Activated CD8-positive, alpha-beta memory T cell treated with anti-CD3 and anti-CD28 coated beads, Interleukin-2, amount 10 ng/mL, durations not matched to agents 7 days and 5 days (primary cell): ENCODE measurements at regions of chr14 and their contacts with region 1.

Region 1: DNA sequence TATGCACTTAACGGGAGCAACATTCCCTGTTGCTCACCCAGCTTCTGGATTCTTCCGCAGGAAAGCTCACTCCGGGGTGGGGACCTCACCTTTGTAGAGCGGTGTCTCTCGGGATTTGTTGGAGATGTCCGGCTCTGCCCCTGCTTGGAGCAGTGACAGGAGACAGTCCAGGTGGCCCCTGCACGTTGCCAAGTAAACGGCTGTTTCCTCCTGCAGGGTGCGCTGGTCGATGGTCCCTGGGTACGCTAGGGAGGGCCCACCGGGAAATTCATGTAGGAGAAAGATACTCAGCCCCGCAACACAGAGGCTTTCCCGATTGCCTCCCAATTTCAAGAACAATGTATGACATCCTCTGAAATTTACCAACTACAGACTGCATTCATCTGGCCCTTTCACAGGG is 23.1 kb downstream of the ASB2 start:
- DNase-seq: no peak
- ATAC-seq: no peak
- H3K4me3 Mint-ChIP-seq: peak overlapping the region; percentile 99
- H3K27ac Mint-ChIP-seq: peak overlapping the region; percentile 99
- H3K4me1 Mint-ChIP-seq: peaks cover 89% of the 10 kb centered on the region
- H3K27me3 Mint-ChIP-seq: no peaks in the 10 kb centered on the region

Region 2: DNA sequence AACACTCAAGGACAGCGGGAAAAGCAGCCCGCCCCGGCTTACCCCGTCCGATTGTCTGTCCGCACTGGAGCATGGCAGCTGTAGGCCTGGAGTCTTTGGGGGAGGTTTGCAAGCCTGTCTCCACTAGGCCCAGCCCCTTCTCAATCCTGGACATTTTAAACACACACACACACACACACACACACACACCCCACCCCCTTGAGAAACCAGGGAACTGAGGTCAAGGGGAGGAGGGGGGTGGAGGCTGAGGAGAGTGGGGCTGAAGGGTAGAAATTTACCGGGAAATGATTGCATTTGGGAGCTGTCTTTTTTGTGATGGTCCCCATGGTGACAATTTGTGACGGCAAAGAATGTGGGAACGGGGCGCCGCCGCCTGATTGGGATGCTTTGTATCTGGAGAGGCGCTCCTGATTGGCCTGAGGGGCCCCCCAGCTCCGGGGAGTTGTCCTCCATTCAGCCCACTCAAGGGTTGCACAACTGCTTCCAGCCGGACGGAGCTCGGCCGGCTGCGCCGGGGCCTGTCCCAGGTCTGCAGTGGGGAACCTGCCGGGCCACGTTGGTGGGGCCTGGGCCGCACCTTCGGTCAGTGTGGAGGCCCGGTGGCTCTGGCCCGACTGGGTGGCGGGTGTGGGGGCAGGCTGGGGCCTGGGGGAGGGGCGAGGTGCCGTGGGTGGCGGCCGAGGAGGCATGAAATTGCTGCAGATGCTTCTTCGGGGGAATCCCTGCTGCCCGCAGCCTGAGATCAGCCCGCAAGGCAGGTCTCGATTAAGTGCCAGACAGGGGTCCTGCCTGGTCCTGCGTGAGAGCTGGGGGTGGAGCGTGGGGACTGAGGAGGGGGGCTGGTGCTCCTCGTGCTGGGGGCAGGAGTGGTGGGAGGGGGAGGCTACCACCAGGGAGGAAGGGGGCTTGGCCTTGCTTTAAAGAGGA is 26.1 kb before region 1 on chr14 and contains the start of gene FAM181A:
- CTCF ChIA-PET with region 1: no interaction called
- DNase-seq: no peak
- ATAC-seq: no peak
- H3K4me3 Mint-ChIP-seq: no peak within 1 kb of the TSS
- H3K27ac Mint-ChIP-seq: no peak within 1 kb of the TSS
- H3K4me1 Mint-ChIP-seq: no peaks in the 10 kb centered on the region
- H3K27me3 Mint-ChIP-seq: no peaks in the 10 kb centered on the region
- total RNA-seq, gene FAM181A: not detected

Region 3: DNA sequence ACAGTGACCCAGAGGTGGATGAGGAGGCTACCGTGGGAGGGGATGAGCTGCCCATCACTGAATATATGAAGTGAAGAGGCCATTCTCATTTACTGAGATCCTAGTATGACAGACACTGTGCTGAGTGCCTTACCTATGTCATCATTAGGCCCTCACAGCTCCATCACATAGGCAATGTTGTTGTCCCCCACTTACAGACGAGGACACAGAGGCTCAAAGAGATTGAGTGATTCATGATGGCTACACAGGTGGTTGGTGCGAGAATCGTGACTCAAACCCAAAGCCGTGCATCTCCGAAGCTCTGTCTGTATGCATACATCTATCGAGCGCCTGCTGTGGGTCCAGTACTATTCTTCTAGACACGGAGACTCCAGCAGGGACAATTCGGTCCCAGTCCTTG is 37.9 kb after region 1 on chr14:
- CTCF ChIA-PET with region 1: interaction called, 11 read pairs
- DNase-seq: no peak
- ATAC-seq: no peak
- H3K4me3 Mint-ChIP-seq: no peak overlapping the region
- H3K27ac Mint-ChIP-seq: no peak overlapping the region
- H3K4me1 Mint-ChIP-seq: peaks cover 19% of the 10 kb centered on the region
- H3K27me3 Mint-ChIP-seq: no peaks in the 10 kb centered on the region

Region 4: DNA sequence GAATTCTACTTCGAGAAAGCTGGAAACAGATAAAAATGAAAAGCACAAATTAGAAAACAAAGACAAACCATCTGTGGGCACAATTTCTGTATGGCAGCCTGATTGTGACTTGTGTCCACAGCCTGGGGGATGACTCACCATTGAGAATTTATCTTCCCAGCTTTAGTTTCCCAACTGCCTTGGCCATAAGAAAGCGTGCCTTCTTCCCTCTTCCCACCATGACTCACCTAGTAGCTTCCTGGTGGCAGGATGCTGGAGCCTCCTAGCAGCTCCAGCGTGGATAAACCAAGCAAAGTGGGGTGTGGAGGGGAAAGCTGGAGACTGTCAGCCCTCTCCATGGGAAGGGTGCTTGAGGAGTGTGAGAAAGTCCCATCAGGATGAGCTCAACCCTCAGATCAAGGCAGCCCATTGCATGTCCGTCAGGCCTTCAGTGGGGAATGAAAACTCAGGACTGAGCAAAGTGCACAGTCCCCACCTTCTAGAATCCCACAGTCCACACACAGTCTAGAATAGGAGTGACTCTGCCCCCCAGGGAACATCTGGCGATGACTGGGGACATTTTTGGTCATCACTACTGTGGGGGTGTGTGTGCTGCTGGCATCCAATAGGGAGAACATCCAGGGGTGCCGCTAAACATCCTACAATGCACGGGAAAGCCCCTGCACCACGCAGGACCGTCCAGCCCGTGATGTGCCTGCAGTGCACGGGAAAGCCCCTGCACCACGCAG is 392.2 kb after region 1 on chr14:
- CTCF ChIA-PET with region 1: no interaction called
- DNase-seq: no peak
- ATAC-seq: no peak
- H3K4me3 Mint-ChIP-seq: no peak overlapping the region
- H3K27ac Mint-ChIP-seq: no peak overlapping the region
- H3K4me1 Mint-ChIP-seq: peaks cover 9% of the 10 kb centered on the region
- H3K27me3 Mint-ChIP-seq: no peaks in the 10 kb centered on the region